ENCODE measurements at regions of chr3 and their contacts with region 1.

Region 1: DNA sequence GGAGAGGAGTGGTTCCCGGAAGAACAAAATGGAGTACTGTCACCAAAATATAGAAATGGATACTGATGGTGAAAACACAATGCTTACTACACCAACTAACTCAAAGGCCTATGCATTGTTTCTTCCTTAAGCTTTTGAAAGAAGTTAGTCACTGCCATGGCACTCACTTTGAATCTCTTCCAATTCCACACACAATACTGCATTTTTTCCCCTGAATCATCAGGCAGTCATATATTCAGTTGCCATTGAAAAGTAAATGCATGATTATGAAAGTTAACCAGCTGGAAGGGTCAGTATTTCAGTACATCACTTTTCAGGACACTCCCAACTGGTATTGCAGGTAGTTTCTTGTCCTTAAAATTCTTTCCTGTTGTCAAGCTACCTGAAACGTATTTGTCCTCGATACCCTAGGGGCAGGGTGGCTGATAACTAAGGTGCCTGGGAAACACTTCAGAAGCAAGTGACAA is 9.0 kb upstream of the LRRFIP2 start:
- DNase-seq: no peak
- H3K4me3 ChIP-seq: no peak overlapping the region
- H3K27ac ChIP-seq: no peak overlapping the region
- H3K4me1 ChIP-seq: no peaks in the 10 kb centered on the region
- H3K27me3 ChIP-seq: no peaks in the 10 kb centered on the region
- CTCF ChIP-seq: no peak

Region 2: GRCh38 chr3:37064747-37065146 is 118.7 kb before region 1 on chr3:
- intact Hi-C with region 1: loop called (anchors 10 kb)
- DNase-seq: no peak
- H3K4me3 ChIP-seq: no peak overlapping the region
- H3K27ac ChIP-seq: no peak overlapping the region
- H3K4me1 ChIP-seq: no peaks in the 10 kb centered on the region
- H3K27me3 ChIP-seq: no peaks in the 10 kb centered on the region
- CTCF ChIP-seq: no peak

Region 3: GRCh38 chr3:37974121-37975083 is 791.0 kb after region 1 on chr3:
- intact Hi-C with region 1: no loop called
- DNase-seq: peak; percentile 83
- H3K4me3 ChIP-seq: no peak overlapping the region
- H3K27ac ChIP-seq: no peak overlapping the region
- H3K4me1 ChIP-seq: no peaks in the 10 kb centered on the region
- H3K27me3 ChIP-seq: no peaks in the 10 kb centered on the region
- CTCF ChIP-seq: peak; percentile 83

Measured in colonic mucosa (tissue), 4 donors.